A549 (cell line): ENCODE measurements at regions of chr9 and their contacts with region 1.

Region 1: GRCh38 chr9:95756986-95757385 is 118.5 kb upstream of the ERCC6L2 start:
- DNase-seq: no peak
- ATAC-seq: no peak
- H3K4me3 ChIP-seq: no peak overlapping the region
- H3K27ac ChIP-seq: no peak overlapping the region
- H3K4me1 ChIP-seq: no peaks in the 10 kb centered on the region
- CTCF ChIP-seq: no peak
- EP300 ChIP-seq: no peak
- POLR2A ChIP-seq: no peak
- RAD21 ChIP-seq: no peak

Region 2: DNA sequence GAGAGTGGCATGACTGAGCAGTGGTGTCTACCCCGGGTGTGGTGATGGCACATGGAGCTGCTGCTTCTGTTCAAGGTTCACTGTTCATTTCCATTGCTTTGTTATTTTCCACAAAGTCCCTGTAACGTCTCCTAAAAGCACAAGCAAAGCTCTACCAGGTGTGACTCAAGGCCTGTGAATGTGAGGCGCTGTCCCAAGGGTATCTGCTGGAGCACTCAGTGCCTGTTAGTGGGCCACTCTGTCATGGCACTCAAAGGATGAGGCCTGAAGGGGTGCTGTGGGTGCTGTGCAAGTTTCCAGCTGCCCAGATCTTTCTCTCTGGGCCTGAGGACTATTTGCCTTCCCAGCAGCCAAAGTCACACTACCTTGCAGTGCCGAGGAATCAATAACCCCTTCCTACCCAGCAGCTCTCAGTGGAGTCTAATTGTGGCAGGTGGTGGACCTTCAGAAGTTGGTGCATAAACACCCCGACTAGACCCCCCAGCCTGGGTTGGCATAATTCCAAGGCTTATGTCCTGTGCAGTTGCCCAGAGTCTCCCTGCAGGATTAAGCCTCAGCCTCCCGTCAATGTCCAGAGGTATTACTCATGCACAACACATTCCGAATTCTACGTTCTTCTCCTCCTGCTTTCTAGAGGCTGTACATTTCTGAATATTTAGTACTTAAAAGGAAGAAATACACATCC is 222.8 kb before region 1 on chr9:
- CTCF ChIA-PET with region 1: no interaction called
- POLR2A ChIA-PET with region 1: no interaction called
- DNase-seq: no peak
- ATAC-seq: no peak
- H3K4me3 ChIP-seq: no peak overlapping the region
- H3K27ac ChIP-seq: no peak overlapping the region
- H3K4me1 ChIP-seq: no peaks in the 10 kb centered on the region
- CTCF ChIP-seq: no peak
- EP300 ChIP-seq: no peak
- POLR2A ChIP-seq: no peak
- RAD21 ChIP-seq: no peak

Region 3: DNA sequence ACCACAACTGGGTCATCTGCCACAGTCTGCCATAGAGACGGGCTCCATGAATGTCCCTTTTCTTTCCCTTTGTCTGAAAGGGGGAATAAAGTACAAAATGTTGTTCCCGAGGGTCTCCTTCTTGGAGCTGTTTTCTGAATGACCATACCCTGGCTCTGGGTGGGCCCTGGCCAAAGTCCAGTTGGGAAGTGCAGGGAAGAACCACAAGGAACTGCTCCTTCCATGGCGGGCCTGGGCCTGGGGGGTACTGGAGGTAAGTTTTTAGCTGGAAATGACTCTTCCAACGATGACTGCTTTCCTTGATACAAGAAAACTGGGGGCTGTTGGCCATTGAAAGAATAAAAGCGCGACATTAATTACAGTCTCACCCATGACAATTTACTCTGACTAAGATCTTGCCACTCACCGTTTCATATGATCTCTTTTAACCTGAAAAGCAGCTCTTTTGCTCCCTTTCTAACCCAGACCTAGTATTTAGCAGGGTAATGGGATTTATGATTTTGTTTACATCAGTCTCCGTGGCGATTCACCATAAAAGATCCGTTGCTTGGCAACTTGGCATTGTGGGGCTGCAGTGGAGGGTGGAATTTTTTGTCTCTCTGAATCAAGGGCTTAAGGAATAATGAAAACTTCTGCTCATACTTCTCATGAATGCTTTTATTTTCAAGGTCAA is 151.0 kb before region 1 on chr9:
- CTCF ChIA-PET with region 1: no interaction called
- POLR2A ChIA-PET with region 1: no interaction called
- DNase-seq: peak in 1 of 2 experiments; percentile 32
- ATAC-seq: no peak
- H3K4me3 ChIP-seq: no peak overlapping the region
- H3K27ac ChIP-seq: no peak overlapping the region
- H3K4me1 ChIP-seq: no peaks in the 10 kb centered on the region
- CTCF ChIP-seq: no peak
- EP300 ChIP-seq: no peak
- POLR2A ChIP-seq: no peak
- RAD21 ChIP-seq: no peak

Region 4: GRCh38 chr9:95744321-95744720 is 12.7 kb before region 1 on chr9:
- CTCF ChIA-PET with region 1: interaction called, 16 read pairs
- POLR2A ChIA-PET with region 1: no interaction called
- DNase-seq: no peak
- ATAC-seq: no peak
- H3K4me3 ChIP-seq: no peak overlapping the region
- H3K27ac ChIP-seq: no peak overlapping the region
- H3K4me1 ChIP-seq: 0 out of 3 replicates have a peak, but pooled peaks cover 4% of the 10 kb centered on the region
- CTCF ChIP-seq: 0 out of 3 replicates have a peak, but pooled peaks have one; percentile 14
- EP300 ChIP-seq: no peak
- POLR2A ChIP-seq: no peak
- RAD21 ChIP-seq: peak in 1 of 2 experiments; percentile 30; a peak in 2 of 5 replicates